Activated CD4-positive, alpha-beta memory T cell treated with anti-CD3 and anti-CD28 coated beads for 36 hours (primary cell): ENCODE measurements at regions of chr19 and their contacts with region 1.

Region 1: DNA sequence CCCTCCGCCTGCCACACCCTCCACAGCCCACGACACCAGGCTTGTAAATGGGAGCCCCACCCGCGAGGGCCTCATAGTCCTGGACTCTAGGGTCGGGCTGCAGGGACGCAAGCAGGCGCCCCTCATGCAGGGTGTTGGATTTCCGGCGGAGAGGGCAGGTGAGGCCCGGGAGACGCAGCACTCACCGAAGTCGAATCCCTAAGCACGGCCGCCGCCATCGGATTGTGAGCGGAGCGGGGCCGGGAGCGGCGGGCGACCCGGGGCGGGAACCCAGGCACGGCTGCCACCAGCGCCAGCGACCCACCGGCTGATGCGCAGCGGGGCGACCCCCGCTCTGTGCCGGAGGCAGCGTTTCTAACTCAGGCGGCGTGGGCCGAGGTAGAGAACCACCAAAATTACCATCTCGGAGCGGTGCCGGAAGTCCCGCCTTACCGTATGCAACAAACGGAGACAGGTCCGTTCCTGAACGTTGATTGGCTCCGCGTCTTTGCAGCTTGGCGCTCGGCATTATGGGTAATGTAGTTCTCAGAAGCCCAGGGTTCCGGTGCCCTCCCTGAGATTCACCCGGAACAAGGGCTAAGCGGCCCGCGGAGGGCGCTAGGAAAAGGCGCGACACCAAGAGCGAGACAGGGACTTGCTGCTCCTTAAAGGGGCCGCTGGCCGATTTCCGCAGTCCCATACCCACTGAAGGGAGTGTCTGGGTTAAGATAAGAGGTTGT is at the start of gene ZNF416:
- DNase-seq: peak; percentile 97
- H3K4me3 Mint-ChIP-seq: peak within 1 kb of the TSS; percentile 76
- H3K27ac Mint-ChIP-seq: peak within 1 kb of the TSS; percentile 75
- H3K4me1 Mint-ChIP-seq: peaks cover 18% of the 10 kb centered on the region
- H3K27me3 Mint-ChIP-seq: no peaks in the 10 kb centered on the region
- total RNA-seq, gene ZNF416: 2.2 to 2.4 TPM

Region 2: GRCh38 chr19:57240311-57241090 is 338.1 kb before region 1 on chr19 and contains the start of gene ZNF805:
- CTCF ChIA-PET with region 1: no interaction called
- POLR2A ChIA-PET with region 1: no interaction called
- intact Hi-C with region 1: loop called (anchors 1 kb)
- DNase-seq: peak; percentile 97
- H3K4me3 Mint-ChIP-seq: peak within 1 kb of the TSS; percentile 90
- H3K27ac Mint-ChIP-seq: peak within 1 kb of the TSS; percentile 89
- H3K4me1 Mint-ChIP-seq: peaks cover 24% of the 10 kb centered on the region
- H3K27me3 Mint-ChIP-seq: no peaks in the 10 kb centered on the region
- total RNA-seq, gene ZNF805: 6.9 to 7.0 TPM

Region 3: GRCh38 chr19:57559404-57560025 is 19.1 kb before region 1 on chr19 and contains the start of gene ZNF550:
- CTCF ChIA-PET with region 1: no interaction called
- POLR2A ChIA-PET with region 1: no interaction called
- intact Hi-C with region 1: loop called (anchors 2 kb)
- DNase-seq: peak; percentile 91
- H3K4me3 Mint-ChIP-seq: peak within 1 kb of the TSS; percentile 90
- H3K27ac Mint-ChIP-seq: peak within 1 kb of the TSS; percentile 82
- H3K4me1 Mint-ChIP-seq: peaks cover 28% of the 10 kb centered on the region
- H3K27me3 Mint-ChIP-seq: peaks cover 4% of the 10 kb centered on the region
- total RNA-seq, gene ZNF550: 5.6 to 6.6 TPM

Region 4: GRCh38 chr19:57613941-57614743 is 35.5 kb after region 1 on chr19 and contains the start of gene ZNF134:
- CTCF ChIA-PET with region 1: no interaction called
- POLR2A ChIA-PET with region 1: no interaction called
- intact Hi-C with region 1: loop called (anchors 5 kb)
- DNase-seq: peak; percentile 93
- H3K4me3 Mint-ChIP-seq: peak within 1 kb of the TSS; percentile 89
- H3K27ac Mint-ChIP-seq: peak within 1 kb of the TSS; percentile 67
- H3K4me1 Mint-ChIP-seq: peaks cover 19% of the 10 kb centered on the region
- H3K27me3 Mint-ChIP-seq: no peaks in the 10 kb centered on the region
- total RNA-seq, gene ZNF134: 6.7 to 8.0 TPM

Region 5: GRCh38 chr19:57914531-57914930 is 335.9 kb after region 1 on chr19:
- CTCF ChIA-PET with region 1: no interaction called
- POLR2A ChIA-PET with region 1: no interaction called
- intact Hi-C with region 1: loop called (anchors 10 kb)
- DNase-seq: no peak
- H3K4me3 Mint-ChIP-seq: no peak overlapping the region
- H3K27ac Mint-ChIP-seq: no peak overlapping the region
- H3K4me1 Mint-ChIP-seq: peaks cover 28% of the 10 kb centered on the region
- H3K27me3 Mint-ChIP-seq: no peaks in the 10 kb centered on the region